ENCODE measurements at regions of chr11 and their contacts with region 1.

Region 1: DNA sequence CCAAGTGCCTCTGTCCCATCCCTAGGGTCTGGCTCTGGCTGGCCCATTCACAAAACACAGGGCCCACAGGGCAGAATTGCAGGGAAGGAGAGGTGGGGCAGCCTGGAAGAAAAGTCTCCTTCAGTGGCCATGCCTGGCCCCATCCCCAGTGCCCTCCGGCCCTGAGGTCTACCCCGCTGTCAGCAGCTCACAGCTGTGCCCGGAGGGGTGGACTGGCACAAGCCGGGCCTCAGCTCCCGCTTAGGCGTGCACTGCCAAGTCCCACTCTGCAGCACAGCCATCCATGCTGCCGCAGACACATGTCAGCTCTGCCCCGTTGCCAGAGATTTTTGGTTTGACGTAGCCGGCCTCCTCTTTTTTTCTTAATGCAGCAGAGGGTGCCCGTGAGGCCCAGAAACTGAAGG is 3.9 kb upstream of the SCN2B start:
- DNase-seq: peak; percentile 64
- H3K4me3 ChIP-seq: no peak overlapping the region
- H3K27ac ChIP-seq: no peak overlapping the region
- H3K4me1 ChIP-seq: peaks cover 19% of the 10 kb centered on the region
- H3K27me3 ChIP-seq: no peaks in the 10 kb centered on the region
- CTCF ChIP-seq: peak in 1 of 2 donors; percentile 33

Region 2: GRCh38 chr11:118098996-118099837 is 81.1 kb before region 1 on chr11:
- CTCF ChIA-PET with region 1: no interaction called
- dilution Hi-C with region 1: loop called (anchors 5 kb)
- in situ Hi-C with region 1: no loop called
- intact Hi-C with region 1: no loop called
- DNase-seq: no peak
- H3K4me3 ChIP-seq: no peak overlapping the region
- H3K27ac ChIP-seq: no peak overlapping the region
- H3K4me1 ChIP-seq: no peaks in the 10 kb centered on the region
- H3K27me3 ChIP-seq: no peaks in the 10 kb centered on the region
- CTCF ChIP-seq: no peak

Measured in mammary epithelial cell (primary cell).